ENCODE measurements at regions of chr1 and their contacts with region 1.

Region 1: DNA sequence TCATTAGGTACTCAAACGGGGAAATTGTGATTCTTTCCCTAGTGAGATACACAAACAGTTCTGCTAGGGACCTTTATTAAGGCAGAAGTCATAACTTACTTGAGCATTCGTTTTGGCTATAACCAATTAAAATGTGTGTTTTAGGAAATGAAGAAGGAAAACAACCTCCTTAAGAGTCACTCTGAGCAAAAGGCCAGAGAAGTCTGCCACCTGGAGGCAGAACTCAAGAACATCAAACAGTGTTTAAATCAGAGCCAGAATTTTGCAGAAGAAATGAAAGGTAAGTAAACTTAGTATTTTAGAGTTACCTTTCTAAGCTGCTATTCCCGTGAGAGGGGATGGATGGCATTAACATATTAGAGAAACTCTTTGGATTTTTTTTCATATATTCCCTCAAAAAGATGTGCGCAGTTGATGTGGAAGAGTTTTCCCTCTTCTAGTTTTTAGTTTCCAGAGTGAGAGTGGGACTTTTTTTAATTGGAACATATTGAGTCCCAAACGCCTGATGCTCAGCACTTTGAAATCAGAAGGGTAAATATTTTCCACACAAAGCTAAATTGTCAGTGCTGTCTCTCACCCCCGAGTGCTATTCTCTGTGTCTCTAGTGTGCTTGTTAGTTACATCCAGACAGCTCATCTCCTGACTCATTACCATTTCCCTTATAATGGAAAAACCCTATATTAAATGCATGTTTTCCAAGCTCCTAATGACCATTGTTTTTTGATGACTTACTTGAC is 34.9 kb downstream of the CENPF start:
- H3K4me3 Mint-ChIP-seq: no peak overlapping the region
- H3K27ac Mint-ChIP-seq: no peak overlapping the region
- H3K4me1 Mint-ChIP-seq: no peaks in the 10 kb centered on the region
- H3K27me3 Mint-ChIP-seq: no peaks in the 10 kb centered on the region

Region 2: DNA sequence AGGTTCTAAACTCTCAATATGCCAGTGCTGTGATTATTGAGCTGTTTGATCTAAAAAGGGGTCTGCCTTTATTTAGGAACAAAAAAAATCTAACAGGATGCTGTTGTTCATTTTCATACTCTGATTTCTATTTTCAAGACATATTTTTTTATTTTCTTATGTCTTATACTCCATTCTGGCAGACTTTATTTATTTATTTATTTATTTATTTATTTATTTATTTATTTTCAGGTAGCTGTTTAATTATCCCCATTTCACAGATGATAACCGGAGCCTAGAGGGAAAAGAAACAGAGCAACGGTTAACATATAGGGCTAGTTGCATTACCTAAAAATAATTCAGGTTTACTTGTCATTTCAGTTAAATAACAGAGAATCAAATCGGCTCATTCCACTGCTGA is 139.5 kb after region 1 on chr1:
- intact Hi-C with region 1: no loop called
- H3K4me3 Mint-ChIP-seq: no peak overlapping the region
- H3K27ac Mint-ChIP-seq: no peak overlapping the region
- H3K4me1 Mint-ChIP-seq: no peaks in the 10 kb centered on the region
- H3K27me3 Mint-ChIP-seq: no peaks in the 10 kb centered on the region

Region 3: DNA sequence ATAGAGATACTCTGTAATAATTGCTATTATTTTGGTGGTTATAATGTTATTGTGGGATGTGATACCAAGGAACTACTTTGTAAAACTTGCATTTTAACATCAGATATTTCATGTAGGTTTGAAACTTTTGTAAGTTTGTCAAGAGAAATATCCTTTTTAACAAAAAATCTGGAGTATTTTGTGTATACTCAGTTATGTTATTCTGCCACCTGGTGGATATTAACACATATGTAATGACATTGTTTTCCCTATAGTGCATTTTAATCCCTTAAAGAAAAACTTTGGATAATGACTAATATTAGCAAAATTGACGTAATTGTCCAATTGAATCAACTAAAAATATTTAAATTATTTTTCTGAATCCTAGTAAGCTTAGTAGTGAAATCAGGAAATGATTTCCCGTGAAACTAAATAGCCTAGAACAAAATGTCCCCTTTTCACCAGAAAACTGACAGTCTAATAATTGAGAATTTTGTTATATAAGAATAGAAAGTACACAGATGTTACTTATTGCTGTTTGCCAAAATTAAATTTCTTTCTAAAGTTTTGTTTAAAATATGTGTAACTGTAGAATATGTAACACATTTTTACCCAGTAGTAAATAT is 968.8 kb after region 1 on chr1:
- intact Hi-C with region 1: loop called (anchors 10 kb)
- H3K4me3 Mint-ChIP-seq: no peak overlapping the region
- H3K27ac Mint-ChIP-seq: no peak overlapping the region
- H3K4me1 Mint-ChIP-seq: no peaks in the 10 kb centered on the region
- H3K27me3 Mint-ChIP-seq: no peaks in the 10 kb centered on the region

Measured in dendritic cell treated with granulocyte-macrophage colony-stimulating factor and Interleukin-4, amounts not matched to agents 40 ng/mL and 50 ng/mL, for 4 days (primary cell).